Upper lobe of right lung (tissue), 1 donor: ENCODE measurements at regions of chr16 and their contacts with region 1.

Region 1: GRCh38 chr16:27449434-27450195 is 47.6 kb downstream of the IL21R start:
- DNase-seq: no peak
- ATAC-seq: peak; percentile 31
- H3K4me3 ChIP-seq: no peak overlapping the region
- H3K27ac ChIP-seq: no peak overlapping the region
- H3K4me1 ChIP-seq: peaks cover 18% of the 10 kb centered on the region
- H3K27me3 ChIP-seq: peaks cover 20% of the 10 kb centered on the region
- CTCF ChIP-seq: no peak

Region 2: DNA sequence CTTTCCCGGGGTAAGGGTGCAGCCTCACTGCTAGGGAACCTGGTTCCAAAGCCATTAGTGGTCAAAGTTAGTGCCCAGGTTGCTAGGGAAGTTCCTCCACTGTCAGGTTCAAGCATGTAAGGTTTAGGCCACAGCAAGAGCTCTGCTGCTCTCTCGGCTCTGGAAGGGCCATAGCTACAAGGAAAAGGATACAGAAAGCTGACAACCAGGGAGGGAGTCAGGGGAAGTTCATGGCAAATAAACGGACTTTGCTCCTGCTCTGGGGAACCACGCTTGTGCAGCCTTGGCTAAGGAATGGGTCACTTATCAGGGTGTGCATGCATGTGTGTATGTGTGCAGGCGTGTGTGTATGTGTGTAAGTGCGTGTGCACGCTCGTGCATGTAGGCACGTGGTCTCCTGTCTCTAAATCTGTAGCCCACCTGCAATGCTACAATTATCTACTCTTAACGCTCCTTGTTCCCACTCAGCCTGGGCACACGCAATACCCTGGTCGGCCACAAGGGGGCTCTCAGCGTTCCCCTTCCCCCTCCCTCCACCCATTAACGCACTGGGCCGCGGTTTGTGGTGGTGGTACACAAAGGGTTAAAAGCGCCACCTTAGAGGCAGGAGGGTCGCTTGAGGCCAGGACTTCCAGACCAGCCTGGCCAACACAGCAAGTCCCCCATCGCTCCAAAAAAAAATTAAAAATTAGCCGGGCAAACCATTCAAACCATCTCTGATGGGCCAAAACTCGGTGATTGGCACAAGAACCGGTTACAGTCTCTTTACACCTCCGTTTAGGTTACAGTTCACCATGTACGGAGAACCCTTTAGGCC is 294.7 kb before region 1 on chr16:
- intact Hi-C with region 1: loop called (anchors 10 kb)
- DNase-seq: peak; percentile 80
- ATAC-seq: peak; percentile 91
- H3K4me3 ChIP-seq: no peak overlapping the region
- H3K27ac ChIP-seq: no peak overlapping the region
- H3K4me1 ChIP-seq: no peaks in the 10 kb centered on the region
- H3K27me3 ChIP-seq: no peaks in the 10 kb centered on the region
- CTCF ChIP-seq: peak; percentile 99

Region 3: GRCh38 chr16:27179500-27180072 is 270.0 kb before region 1 on chr16:
- intact Hi-C with region 1: loop called (anchors 10 kb)
- DNase-seq: peak; percentile 88
- ATAC-seq: peak; percentile 98
- H3K4me3 ChIP-seq: no peak overlapping the region
- H3K27ac ChIP-seq: no peak overlapping the region
- H3K4me1 ChIP-seq: no peaks in the 10 kb centered on the region
- H3K27me3 ChIP-seq: peaks cover 3% of the 10 kb centered on the region
- CTCF ChIP-seq: peak; percentile 92

Region 4: DNA sequence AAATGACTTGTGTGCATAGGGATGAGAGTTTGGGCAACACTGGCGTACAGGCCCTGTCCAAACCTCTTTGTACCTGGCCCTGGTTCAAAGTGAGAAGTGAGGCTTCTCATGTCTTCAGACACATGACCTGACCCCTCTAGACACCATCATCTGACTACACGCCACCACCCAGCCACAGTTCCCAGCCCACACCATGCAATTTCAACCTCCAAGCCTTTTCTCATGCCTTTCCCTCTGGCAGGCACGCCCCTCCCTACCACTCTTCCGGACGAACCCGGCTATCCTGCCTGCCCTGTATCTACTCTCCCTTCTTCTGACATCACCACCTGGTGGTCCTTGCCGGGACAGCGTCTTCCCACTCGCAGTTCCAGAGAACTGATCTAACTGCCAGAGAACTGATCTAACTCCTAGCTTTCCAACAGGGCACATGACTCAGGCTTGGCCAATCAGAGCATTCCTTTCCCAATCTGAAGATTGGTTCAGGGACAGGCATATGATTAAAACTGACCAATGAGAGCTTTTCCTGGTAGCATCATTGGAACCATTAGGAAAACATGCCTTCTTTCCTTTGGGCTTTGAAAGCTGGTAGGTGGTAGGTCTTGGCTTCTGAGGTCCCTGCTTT is 74.7 kb before region 1 on chr16:
- intact Hi-C with region 1: loop called (anchors 10 kb)
- DNase-seq: peak; percentile 79
- ATAC-seq: peak; percentile 89
- H3K4me3 ChIP-seq: no peak overlapping the region
- H3K27ac ChIP-seq: peak overlapping the region; percentile 19
- H3K4me1 ChIP-seq: peaks cover 12% of the 10 kb centered on the region
- H3K27me3 ChIP-seq: no peaks in the 10 kb centered on the region
- CTCF ChIP-seq: peak; percentile 48